Heart right ventricle (tissue), 16 donors: ENCODE measurements at regions of chr2 and their contacts with region 1.

Region 1: DNA sequence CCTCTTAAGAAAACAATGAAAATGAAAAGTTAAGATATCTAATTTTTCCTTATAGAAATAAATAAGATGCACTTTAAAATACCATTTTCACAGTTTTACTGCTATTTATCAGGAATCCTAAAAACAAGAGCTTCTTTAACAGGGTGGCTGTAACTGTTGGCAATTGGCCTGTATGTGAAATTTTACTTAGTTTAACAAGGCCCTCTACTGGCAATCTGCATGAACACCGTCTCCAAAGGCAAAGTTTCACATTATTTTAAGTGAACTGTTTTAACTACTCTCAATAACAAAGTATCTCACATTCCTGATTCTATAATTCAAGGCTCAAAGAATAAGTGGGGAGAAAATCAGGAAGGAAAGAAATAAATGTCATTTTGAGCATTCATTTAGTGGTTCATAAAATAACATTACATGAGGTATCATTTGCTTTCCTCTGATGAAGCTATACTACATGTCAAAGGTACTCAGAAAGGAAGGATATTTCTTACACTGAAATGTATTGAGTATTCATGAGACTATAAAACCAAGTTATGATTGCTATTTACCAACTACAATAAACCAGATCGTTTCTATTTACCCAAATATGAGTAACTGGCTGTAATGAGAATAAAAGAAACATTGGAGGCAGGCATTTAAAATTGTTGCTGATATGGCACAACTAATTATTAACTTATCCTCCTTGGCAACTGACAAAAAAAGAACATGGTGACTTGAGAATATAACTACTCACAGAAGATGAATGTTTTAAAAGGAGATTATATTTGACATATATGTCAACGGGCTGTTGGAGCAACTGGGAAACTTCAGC is 7.0 kb downstream of the NCKAP5 start:
- DNase-seq: peak in 1 of 2 donors; percentile 12
- ATAC-seq: peak in 2 of 8 donors; percentile 42 to 58
- H3K4me3 ChIP-seq: no peak overlapping the region
- H3K27ac ChIP-seq: no peak overlapping the region
- H3K4me1 ChIP-seq: peaks cover 0 to 19% (median 0%) of the 10 kb centered on the region in 9 donors
- H3K27me3 ChIP-seq: no peaks in the 10 kb centered on the region
- CTCF ChIP-seq: peak; percentile 31 to 76 (median 63)

Region 2: DNA sequence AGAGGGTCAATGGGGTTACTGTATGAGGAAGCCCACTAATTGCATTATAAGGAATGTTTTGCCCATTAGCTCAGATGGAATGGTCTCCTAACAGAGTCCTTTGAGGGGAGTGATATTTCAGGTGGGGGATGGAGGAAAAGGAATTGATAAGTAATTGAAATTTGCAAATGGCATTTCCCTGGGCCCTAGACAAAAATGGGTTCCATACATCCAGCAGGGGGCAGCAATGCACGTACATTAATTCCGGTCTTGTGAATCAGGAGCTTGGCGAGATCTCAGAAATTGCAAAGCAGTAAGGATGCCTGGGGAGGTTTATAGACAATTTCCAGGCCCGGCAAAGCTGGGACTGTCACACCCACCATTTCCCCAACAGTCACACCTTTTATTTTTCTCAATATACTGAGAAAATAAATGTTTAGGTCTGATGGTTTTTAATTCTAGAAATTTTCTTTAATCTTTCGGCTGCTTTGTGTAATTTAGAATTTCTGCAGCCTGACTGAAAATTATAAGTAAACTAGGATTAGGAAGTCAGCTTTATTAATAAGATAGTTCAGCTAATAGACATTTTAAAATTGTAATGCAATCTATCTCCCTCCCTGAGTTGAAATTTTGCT is 1014.1 kb before region 1 on chr2:
- intact Hi-C with region 1: loop called in 6 of 10 experiments (anchors 5 to 10 kb)
- DNase-seq: peak; percentile 23 to 67
- ATAC-seq: peak in 1 of 8 donors; percentile 53
- H3K4me3 ChIP-seq: no peak overlapping the region
- H3K27ac ChIP-seq: no peak overlapping the region
- H3K4me1 ChIP-seq: no peaks in the 10 kb centered on the region
- H3K27me3 ChIP-seq: peaks cover 0 to 10% (median 5%) of the 10 kb centered on the region in 7 donors
- CTCF ChIP-seq: peak; percentile 51 to 75 (median 68)

Region 3: GRCh38 chr2:133266041-133266925 is 295.0 kb before region 1 on chr2:
- intact Hi-C with region 1: loop called in 4 of 10 experiments (anchors 5 to 10 kb)
- DNase-seq: peak in 1 of 2 donors; percentile 26
- ATAC-seq: peak; percentile 33 to 76 (median 52)
- H3K4me3 ChIP-seq: peak overlapping the region in 9 of 10 donors; percentile 37 to 59 (median 52)
- H3K27ac ChIP-seq: peak overlapping the region in 5 of 10 donors; percentile 13 to 52 (median 25)
- H3K4me1 ChIP-seq: peaks cover 0 to 30% (median 0%) of the 10 kb centered on the region in 9 donors
- H3K27me3 ChIP-seq: peaks cover 0 to 20% (median 9%) of the 10 kb centered on the region in 7 donors
- CTCF ChIP-seq: peak in 2 of 9 donors; percentile 9 to 11

Region 4: GRCh38 chr2:133421516-133422312 is 139.5 kb before region 1 on chr2:
- intact Hi-C with region 1: loop called in 1 of 10 experiments (anchors 10 kb)
- DNase-seq: peak; percentile 14 to 35
- ATAC-seq: peak; percentile 72 to 97 (median 90)
- H3K4me3 ChIP-seq: no peak overlapping the region
- H3K27ac ChIP-seq: peak overlapping the region in 3 of 10 donors; percentile 7 to 32 (median 16)
- H3K4me1 ChIP-seq: peaks cover 0 to 26% (median 3%) of the 10 kb centered on the region in 9 donors
- H3K27me3 ChIP-seq: no peaks in the 10 kb centered on the region
- CTCF ChIP-seq: peak in 3 of 9 donors; percentile 27 to 35 (median 28)

Region 5: GRCh38 chr2:133609664-133610063 is 48.4 kb after region 1 on chr2:
- intact Hi-C with region 1: no loop called
- DNase-seq: no peak
- ATAC-seq: no peak
- H3K4me3 ChIP-seq: no peak overlapping the region
- H3K27ac ChIP-seq: no peak overlapping the region
- H3K4me1 ChIP-seq: no peaks in the 10 kb centered on the region
- H3K27me3 ChIP-seq: no peaks in the 10 kb centered on the region
- CTCF ChIP-seq: no peak

Region 6: GRCh38 chr2:133780099-133780839 is 219.0 kb after region 1 on chr2:
- intact Hi-C with region 1: loop called in 7 of 10 experiments (anchors 2 to 10 kb)
- DNase-seq: peak in 1 of 2 donors; percentile 69
- ATAC-seq: peak in 7 of 8 donors; percentile 49 to 77 (median 67)
- H3K4me3 ChIP-seq: no peak overlapping the region
- H3K27ac ChIP-seq: no peak overlapping the region
- H3K4me1 ChIP-seq: peaks cover 0 to 10% (median under 1%) of the 10 kb centered on the region in 9 donors
- H3K27me3 ChIP-seq: no peaks in the 10 kb centered on the region
- CTCF ChIP-seq: peak; percentile 47 to 83 (median 77)